Activated T-helper 1 cell treated with anti-CD3 and anti-CD28 coated beads, Interleukin-12 subunit alpha, Interleukin-12 subunit beta, Interleukin-2, Interleukin-4 antibody, amounts not matched to agents 30 ng/mL and 10 ng/mL and 1 ng/mL, durations not matched to agents 14 hours and 24 hours and 36 hours (primary cell): ENCODE measurements at regions of chr2 and their contacts with region 1.

Region 1: DNA sequence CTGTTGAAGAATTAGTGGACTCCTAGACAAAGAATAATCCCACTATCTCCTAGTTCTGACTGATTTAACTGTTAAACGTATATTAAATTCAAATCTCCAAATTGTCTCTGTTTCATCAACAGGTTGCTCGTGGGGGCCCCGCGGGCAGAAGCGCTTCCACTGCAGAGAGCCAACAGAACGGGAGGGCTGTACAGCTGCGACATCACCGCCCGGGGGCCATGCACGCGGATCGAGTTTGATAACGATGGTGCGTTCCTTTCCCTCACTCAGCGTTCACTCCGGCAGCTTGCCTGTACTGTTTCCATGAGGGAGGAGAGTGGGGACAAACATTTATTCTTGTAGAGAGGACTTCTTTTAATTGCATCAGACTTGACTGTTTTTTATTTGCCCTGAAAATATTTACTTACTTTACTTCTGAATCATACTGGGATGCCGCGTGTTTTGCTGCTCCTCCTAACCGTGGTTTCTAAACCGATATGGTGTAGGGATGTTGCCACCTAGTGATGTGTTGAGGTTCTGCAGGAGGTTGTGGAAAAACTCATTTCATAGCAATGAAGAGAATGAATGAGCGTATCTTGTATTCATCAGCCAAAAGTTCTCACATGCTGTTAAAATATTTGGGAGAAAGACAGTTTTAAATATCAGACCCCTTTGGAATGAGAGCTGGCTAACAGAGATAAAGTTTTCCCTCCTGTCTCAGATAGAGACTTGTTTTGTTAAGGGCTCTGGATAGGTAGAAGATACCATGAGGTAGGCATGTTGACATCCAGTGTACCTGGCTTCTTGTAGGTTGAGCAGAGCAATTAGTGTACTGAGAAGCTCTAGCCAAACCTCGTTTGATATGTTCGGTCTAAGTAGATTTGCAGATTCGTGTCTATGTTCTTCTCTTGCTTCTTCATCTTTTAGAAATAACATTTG is 38.3 kb downstream of the ITGA6 start:
- DNase-seq: peak; percentile 61
- H3K4me3 Mint-ChIP-seq: peak overlapping the region; percentile 15
- H3K27ac Mint-ChIP-seq: no peak overlapping the region
- H3K4me1 Mint-ChIP-seq: peaks cover 54% of the 10 kb centered on the region
- H3K27me3 Mint-ChIP-seq: no peaks in the 10 kb centered on the region

Region 2: GRCh38 chr2:171703574-171704347 is 761.9 kb before region 1 on chr2:
- intact Hi-C with region 1: loop called (anchors 1 kb)
- DNase-seq: no peak
- H3K4me3 Mint-ChIP-seq: no peak overlapping the region
- H3K27ac Mint-ChIP-seq: no peak overlapping the region
- H3K4me1 Mint-ChIP-seq: peaks cover 12% of the 10 kb centered on the region
- H3K27me3 Mint-ChIP-seq: no peaks in the 10 kb centered on the region

Region 3: GRCh38 chr2:171966268-171966667 is 499.4 kb before region 1 on chr2:
- intact Hi-C with region 1: no loop called
- DNase-seq: no peak
- H3K4me3 Mint-ChIP-seq: no peak overlapping the region
- H3K27ac Mint-ChIP-seq: no peak overlapping the region
- H3K4me1 Mint-ChIP-seq: peaks cover 23% of the 10 kb centered on the region
- H3K27me3 Mint-ChIP-seq: no peaks in the 10 kb centered on the region

Region 4: DNA sequence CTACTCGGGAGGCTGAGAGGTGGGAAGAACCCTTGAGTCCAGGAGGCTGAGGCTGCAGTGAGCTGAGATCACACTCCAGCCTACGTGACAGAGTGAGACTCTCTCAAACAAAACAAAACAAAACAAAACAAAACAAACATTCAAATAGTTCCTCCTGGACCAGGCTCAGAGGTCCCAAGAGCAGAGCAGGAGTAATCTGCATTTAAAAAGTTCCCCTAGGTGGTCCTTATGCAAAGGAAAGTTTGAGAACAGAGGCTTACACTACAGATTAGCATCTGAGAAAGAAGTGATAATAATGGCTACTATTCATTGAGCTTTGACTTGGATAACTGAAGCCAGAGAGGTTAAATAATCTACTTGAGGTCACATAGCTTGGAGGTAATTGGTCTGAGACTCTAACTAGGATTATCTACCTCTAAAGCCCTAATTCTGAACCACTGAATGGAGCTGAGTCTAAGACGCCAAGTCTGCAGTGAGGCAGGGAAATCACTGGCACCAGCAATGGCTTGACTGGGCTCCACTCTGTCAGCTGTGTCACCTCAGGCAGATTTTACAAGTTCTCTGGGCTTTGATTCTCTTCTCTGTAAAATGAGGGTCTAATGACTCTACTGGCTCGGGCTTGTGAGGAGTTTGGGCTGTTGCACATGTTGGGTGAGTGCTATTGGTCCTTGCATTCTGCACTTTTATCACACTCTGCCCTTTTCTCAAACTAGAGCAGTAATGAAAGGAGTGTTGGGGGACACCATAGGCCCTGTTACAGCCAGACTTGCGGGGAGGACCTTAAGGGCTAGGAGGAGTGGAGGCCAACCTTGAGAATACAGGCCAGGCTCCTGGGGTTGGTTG is 333.7 kb before region 1 on chr2:
- intact Hi-C with region 1: loop called (anchors 1 kb)
- DNase-seq: no peak
- H3K4me3 Mint-ChIP-seq: no peak overlapping the region
- H3K27ac Mint-ChIP-seq: no peak overlapping the region
- H3K4me1 Mint-ChIP-seq: no peaks in the 10 kb centered on the region
- H3K27me3 Mint-ChIP-seq: peaks cover 32% of the 10 kb centered on the region

Region 5: GRCh38 chr2:172253190-172254052 is 212.3 kb before region 1 on chr2:
- intact Hi-C with region 1: loop called (anchors 5 kb)
- DNase-seq: peak; percentile 53
- H3K4me3 Mint-ChIP-seq: no peak overlapping the region
- H3K27ac Mint-ChIP-seq: peak overlapping the region; percentile 62
- H3K4me1 Mint-ChIP-seq: peaks cover 49% of the 10 kb centered on the region
- H3K27me3 Mint-ChIP-seq: no peaks in the 10 kb centered on the region

Region 6: GRCh38 chr2:172442072-172442895 is 23.4 kb before region 1 on chr2:
- intact Hi-C with region 1: loop called (anchors 1 kb)
- DNase-seq: no peak
- H3K4me3 Mint-ChIP-seq: peak overlapping the region; percentile 63
- H3K27ac Mint-ChIP-seq: peak overlapping the region; percentile 25
- H3K4me1 Mint-ChIP-seq: peaks cover 26% of the 10 kb centered on the region
- H3K27me3 Mint-ChIP-seq: peaks cover 6% of the 10 kb centered on the region

Region 7: DNA sequence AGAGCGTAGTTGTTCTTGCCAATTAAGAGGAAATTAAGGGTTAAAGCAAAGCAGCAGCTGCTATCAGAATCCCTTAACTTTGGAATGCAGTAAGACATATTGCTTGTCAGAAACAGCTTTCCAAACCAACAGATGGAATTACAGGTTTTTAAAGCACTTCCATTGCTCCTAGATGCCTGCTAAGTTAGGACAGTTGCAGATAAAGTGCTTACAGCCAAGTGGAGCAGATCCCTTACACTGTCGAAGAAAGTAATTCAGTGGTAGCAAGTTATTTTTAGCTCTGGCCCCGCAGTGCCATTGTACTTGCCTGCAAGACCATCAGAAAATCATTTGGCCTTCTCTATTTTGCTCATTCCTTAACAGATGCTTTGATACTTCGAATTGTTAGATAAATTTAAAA is 95.6 kb after region 1 on chr2:
- intact Hi-C with region 1: no loop called
- DNase-seq: no peak
- H3K4me3 Mint-ChIP-seq: no peak overlapping the region
- H3K27ac Mint-ChIP-seq: no peak overlapping the region
- H3K4me1 Mint-ChIP-seq: peaks cover 51% of the 10 kb centered on the region
- H3K27me3 Mint-ChIP-seq: no peaks in the 10 kb centered on the region